Right cardiac atrium (tissue), 5 donors: ENCODE measurements at regions of chr17 and their contacts with region 1.

Region 1: DNA sequence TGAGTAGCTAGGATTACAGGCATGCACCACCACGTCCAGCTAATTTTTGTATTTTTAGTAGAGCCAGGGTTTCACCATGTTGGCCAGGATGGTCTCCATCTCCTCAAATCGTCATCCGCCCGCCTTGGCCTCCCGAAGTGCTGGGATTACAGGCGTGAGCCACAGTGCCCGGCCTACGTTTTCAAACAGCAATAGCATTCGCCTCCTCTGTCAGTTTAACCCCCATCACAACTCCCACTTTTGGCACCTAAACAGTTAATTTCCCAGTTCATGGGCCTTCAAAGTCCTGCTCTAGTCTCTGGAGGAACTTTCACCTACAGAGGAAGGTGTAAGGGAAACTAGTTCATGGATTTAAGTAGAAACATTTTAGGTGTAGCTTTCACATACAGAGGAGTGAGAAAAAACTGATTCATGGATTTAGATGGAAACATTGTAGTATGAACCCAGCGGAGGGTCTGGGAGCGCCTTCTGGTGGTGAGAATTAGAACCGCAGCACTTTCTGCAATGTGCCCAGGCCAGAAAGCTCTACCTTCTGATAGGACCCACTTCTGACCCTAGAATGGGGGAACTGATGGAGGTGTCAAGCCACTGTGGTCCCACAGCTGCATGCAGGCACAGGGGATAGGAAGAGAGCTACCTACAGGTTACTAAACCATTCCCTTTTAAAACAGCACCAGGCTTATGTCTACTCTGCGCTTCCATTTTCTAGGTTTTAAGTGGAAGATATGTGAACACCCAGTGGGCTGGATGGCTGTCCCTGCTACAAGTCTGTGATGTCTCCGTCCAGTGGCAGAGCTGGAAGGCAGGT is 12.0 kb upstream of the MEOX1 start:
- DNase-seq: peak; percentile 69 to 90 (median 85)
- ATAC-seq: peak; percentile 61 to 70
- H3K4me3 ChIP-seq: no peak overlapping the region
- H3K27ac ChIP-seq: no peak overlapping the region
- H3K4me1 ChIP-seq: peaks cover 3% of the 10 kb centered on the region
- H3K27me3 ChIP-seq: no peaks in the 10 kb centered on the region

Region 2: DNA sequence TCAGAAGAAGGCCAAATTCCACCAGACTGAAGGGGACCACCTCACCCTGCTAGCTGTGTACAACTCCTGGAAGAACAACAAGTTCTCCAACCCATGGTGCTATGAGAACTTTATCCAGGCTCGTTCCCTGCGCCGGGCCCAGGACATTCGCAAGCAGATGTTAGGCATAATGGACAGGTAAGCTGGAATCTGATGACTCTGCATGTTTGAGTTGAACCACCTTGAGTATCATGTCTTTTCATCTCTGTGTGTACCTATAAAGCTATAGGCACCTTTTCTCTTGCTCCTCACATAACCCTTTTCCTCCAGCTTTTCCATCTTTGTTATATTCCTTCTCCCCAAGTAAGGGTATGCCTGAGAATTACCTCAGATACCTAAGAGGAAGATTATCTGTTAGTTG is 152.3 kb before region 1 on chr17:
- intact Hi-C with region 1: loop called in 1 of 4 experiments (anchors 2 kb)
- DNase-seq: no peak
- ATAC-seq: no peak
- H3K4me3 ChIP-seq: no peak overlapping the region
- H3K27ac ChIP-seq: no peak overlapping the region
- H3K4me1 ChIP-seq: no peaks in the 10 kb centered on the region
- H3K27me3 ChIP-seq: no peaks in the 10 kb centered on the region

Region 3: GRCh38 chr17:43576563-43577229 is 97.0 kb before region 1 on chr17:
- intact Hi-C with region 1: loop called (anchors 1 to 2 kb)
- DNase-seq: peak; percentile 66 to 85 (median 84)
- ATAC-seq: peak; percentile 76 to 83
- H3K4me3 ChIP-seq: no peak overlapping the region
- H3K27ac ChIP-seq: no peak overlapping the region
- H3K4me1 ChIP-seq: peaks cover 7% of the 10 kb centered on the region
- H3K27me3 ChIP-seq: no peaks in the 10 kb centered on the region